SK-N-SH (cell line): ENCODE measurements at regions of chr14 and their contacts with region 1.

Region 1: DNA sequence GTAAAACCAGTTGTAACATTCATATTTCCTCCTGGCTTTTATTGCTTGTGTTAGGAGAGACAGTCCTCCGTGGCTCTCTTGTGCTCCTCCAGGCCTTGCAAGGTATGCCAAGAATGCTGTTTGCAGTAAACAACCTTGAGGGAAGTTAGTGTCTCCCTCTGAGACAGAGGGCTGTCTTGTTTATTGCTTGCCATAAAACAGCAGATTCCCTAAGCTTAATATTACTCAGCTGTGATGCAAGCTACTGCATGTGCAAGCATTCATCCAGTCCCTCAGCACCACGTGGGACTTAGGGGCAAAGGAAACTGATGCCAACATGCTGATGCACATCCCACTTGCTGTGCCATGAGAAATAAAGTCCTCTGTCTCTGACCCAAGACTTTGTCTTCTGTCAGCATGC is 6.6 kb downstream of the POMT2 start:
- DNase-seq: no peak
- H3K4me3 ChIP-seq: no peak overlapping the region
- H3K27ac ChIP-seq: peak overlapping the region in 1 of 2 experiments; percentile 36; a peak in 1 of 4 replicates
- H3K4me1 ChIP-seq: peaks cover 7 to 18% of the 10 kb centered on the region in 2 experiments; a peak in 3 of 4 replicates
- H3K27me3 ChIP-seq: no peaks in the 10 kb centered on the region
- CTCF ChIP-seq: no peak
- EP300 ChIP-seq: no peak
- RAD21 ChIP-seq: no peak

Region 2: GRCh38 chr14:77139540-77140358 is 174.3 kb before region 1 on chr14:
- CTCF ChIA-PET with region 1: interaction called, 60 read pairs
- POLR2A ChIA-PET with region 1: no interaction called
- DNase-seq: peak; percentile 90
- H3K4me3 ChIP-seq: peak overlapping the region; percentile 50 to 62; a peak in 3 of 4 replicates
- H3K27ac ChIP-seq: no peak overlapping the region
- H3K4me1 ChIP-seq: peaks cover 0 to 29% of the 10 kb centered on the region in 2 experiments; a peak in 3 of 4 replicates
- H3K27me3 ChIP-seq: peaks cover 40% of the 10 kb centered on the region
- CTCF ChIP-seq: peak; percentile 63
- EP300 ChIP-seq: no peak
- RAD21 ChIP-seq: peak; percentile 54

Region 3: DNA sequence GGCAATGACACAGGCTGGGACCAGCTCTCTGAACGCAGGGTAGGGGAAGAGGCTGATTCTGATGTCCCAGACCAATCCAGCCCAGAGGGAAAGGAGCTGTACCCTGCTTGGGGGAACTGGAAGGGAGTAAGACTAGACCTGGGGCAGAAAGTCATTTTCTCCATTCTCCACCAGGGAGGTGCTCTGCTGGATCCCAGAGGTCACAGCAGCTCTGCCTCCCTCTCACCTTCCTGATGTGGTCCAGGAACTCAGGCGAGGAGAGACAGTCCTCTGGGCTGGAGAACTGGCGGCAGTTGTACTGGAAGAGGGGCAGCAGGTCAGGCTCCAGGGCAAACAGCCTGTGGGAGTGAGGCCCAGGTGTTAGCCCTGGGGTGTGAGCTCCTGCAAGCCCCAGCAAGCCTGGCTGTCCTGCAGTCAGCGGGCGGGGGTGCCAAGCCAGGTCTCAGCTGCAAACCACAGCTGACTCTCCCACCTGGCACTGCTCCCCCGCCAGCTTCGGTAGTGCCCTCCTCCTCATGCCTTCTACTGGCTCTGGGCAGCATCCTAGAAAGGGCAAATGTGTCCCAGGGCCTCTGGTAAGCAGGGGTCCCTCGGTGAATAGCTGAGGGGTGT is 44.9 kb before region 1 on chr14:
- CTCF ChIA-PET with region 1: interaction called, 12 read pairs
- POLR2A ChIA-PET with region 1: no interaction called
- DNase-seq: no peak
- H3K4me3 ChIP-seq: no peak overlapping the region
- H3K27ac ChIP-seq: no peak overlapping the region
- H3K4me1 ChIP-seq: no peaks in the 10 kb centered on the region; a peak in 1 of 4 replicates
- H3K27me3 ChIP-seq: peaks cover 27% of the 10 kb centered on the region
- CTCF ChIP-seq: no peak
- EP300 ChIP-seq: no peak
- RAD21 ChIP-seq: no peak

Region 4: DNA sequence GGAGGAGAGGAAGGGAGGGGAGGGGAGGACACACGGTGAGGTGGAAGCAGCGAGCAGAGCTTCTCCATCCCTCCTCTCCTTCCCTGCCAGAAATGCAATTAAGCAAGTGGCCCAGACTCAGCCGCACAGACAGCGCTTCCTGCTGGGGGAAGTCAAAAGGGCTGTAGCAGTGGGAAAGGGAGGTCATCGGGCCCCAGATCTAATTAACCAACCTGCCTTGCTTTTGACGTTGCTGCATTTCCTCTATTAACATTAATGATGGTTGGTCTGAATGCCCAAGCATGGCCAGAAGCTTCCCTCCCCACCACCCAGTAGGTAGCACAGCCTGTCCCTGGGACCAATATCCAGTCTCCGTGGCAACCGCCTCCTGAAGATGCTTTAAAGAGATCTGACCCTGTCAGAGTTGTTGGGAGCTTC is 38.4 kb before region 1 on chr14:
- CTCF ChIA-PET with region 1: interaction called, 13 read pairs
- POLR2A ChIA-PET with region 1: no interaction called
- DNase-seq: peak; percentile 84
- H3K4me3 ChIP-seq: no peak overlapping the region
- H3K27ac ChIP-seq: peak overlapping the region in 1 of 2 experiments; percentile 65; a peak in 2 of 4 replicates
- H3K4me1 ChIP-seq: peaks cover 0 to 18% of the 10 kb centered on the region in 2 experiments; a peak in 1 of 4 replicates
- H3K27me3 ChIP-seq: peaks cover 7% of the 10 kb centered on the region
- CTCF ChIP-seq: no peak
- EP300 ChIP-seq: no peak
- RAD21 ChIP-seq: peak; percentile 52

Region 5: DNA sequence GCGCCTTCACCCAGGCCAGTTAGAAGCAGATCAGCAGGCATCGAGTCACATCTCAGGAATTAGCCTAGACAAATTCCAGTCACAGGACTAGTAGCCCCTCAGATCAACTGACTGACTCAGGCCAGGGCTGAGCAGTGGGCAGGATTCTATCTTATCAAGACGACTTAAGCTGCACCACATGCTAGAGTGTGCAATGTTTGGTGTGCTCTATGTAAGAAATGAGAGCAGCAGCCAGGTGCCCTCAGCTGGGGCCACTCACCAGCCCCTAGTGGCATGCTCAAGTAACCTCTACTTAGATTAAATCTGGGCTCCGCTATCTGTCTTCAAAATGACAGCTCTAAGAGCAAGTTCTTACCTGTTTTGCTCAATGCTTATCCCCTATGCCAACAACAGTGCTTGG is 23.3 kb before region 1 on chr14:
- CTCF ChIA-PET with region 1: interaction called, 28 read pairs
- POLR2A ChIA-PET with region 1: no interaction called
- DNase-seq: no peak
- H3K4me3 ChIP-seq: no peak overlapping the region
- H3K27ac ChIP-seq: no peak overlapping the region
- H3K4me1 ChIP-seq: no peaks in the 10 kb centered on the region
- H3K27me3 ChIP-seq: no peaks in the 10 kb centered on the region
- CTCF ChIP-seq: peak; percentile 24; the same call in 1 of the 2 replicates
- EP300 ChIP-seq: no peak
- RAD21 ChIP-seq: no peak

Region 6: DNA sequence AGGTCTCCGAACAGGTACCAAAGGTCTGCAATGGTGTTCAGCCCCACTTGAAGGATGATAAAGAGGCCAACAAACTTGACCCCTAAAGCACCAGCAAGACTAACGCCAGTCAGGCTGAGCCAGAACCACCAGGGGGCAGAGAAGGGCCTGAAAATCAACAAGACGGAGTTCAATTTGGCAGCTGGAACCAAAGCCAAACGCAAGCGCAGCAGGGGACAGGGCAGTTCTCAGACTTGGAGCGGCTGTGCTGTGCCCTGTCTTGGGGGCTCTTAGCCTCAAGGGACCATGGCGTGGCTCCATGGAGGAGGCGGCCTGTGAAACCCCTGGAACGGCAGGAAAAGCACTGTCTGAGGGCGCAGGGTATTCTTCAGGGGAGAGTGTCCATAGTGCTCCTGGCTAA is 12.9 kb before region 1 on chr14:
- CTCF ChIA-PET with region 1: interaction called, 143 read pairs
- POLR2A ChIA-PET with region 1: interaction called, 4 read pairs
- DNase-seq: peak; percentile 65
- H3K4me3 ChIP-seq: no peak overlapping the region; a peak in 1 of 4 replicates
- H3K27ac ChIP-seq: no peak overlapping the region
- H3K4me1 ChIP-seq: peaks cover under 1 to 19% of the 10 kb centered on the region in 2 experiments; a peak in 3 of 4 replicates
- H3K27me3 ChIP-seq: no peaks in the 10 kb centered on the region
- CTCF ChIP-seq: peak; percentile 81
- EP300 ChIP-seq: no peak
- RAD21 ChIP-seq: peak; percentile 76

Region 7: GRCh38 chr14:77326167-77326566 is 12.1 kb after region 1 on chr14:
- CTCF ChIA-PET with region 1: interaction called, 10 read pairs
- POLR2A ChIA-PET with region 1: no interaction called
- DNase-seq: no peak
- H3K4me3 ChIP-seq: no peak overlapping the region
- H3K27ac ChIP-seq: no peak overlapping the region
- H3K4me1 ChIP-seq: peaks cover 0 to 8% of the 10 kb centered on the region in 2 experiments; a peak in 2 of 4 replicates
- H3K27me3 ChIP-seq: no peaks in the 10 kb centered on the region
- CTCF ChIP-seq: no peak
- EP300 ChIP-seq: no peak
- RAD21 ChIP-seq: no peak

Region 8: GRCh38 chr14:77562681-77563080 is 248.6 kb after region 1 on chr14:
- CTCF ChIA-PET with region 1: no interaction called
- POLR2A ChIA-PET with region 1: no interaction called
- DNase-seq: no peak
- H3K4me3 ChIP-seq: no peak overlapping the region
- H3K27ac ChIP-seq: peak overlapping the region in 1 of 2 experiments; percentile 64; a peak in 2 of 4 replicates
- H3K4me1 ChIP-seq: no peaks in the 10 kb centered on the region
- H3K27me3 ChIP-seq: no peaks in the 10 kb centered on the region
- CTCF ChIP-seq: no peak
- EP300 ChIP-seq: no peak
- RAD21 ChIP-seq: no peak

Region 9: GRCh38 chr14:77799863-77800730 is 486.1 kb after region 1 on chr14 and contains the start of gene ADCK1:
- CTCF ChIA-PET with region 1: no interaction called
- POLR2A ChIA-PET with region 1: no interaction called
- DNase-seq: peak; percentile 90
- H3K4me3 ChIP-seq: peak within 1 kb of the TSS; percentile 65 to 75
- H3K27ac ChIP-seq: peak within 1 kb of the TSS; percentile 66 to 85
- H3K4me1 ChIP-seq: 0 out of 4 replicates have a peak, but pooled peaks cover 0 to 4% of the 10 kb centered on the region in 2 experiments
- H3K27me3 ChIP-seq: no peaks in the 10 kb centered on the region
- CTCF ChIP-seq: peak; percentile 46
- EP300 ChIP-seq: peak in 1 of 2 experiments; percentile 42; a peak in 1 of 4 replicates
- RAD21 ChIP-seq: peak; percentile 1; the same call in 1 of the 2 replicates
- polyA plus RNA-seq, gene ADCK1: 10.4 and 11.4 TPM in 2 replicates